ENCODE measurements at regions of chr1 and their contacts with region 1.

Region 1: GRCh38 chr1:67840449-67840848 is 7.2 kb upstream of the GNG12 start:
- DNase-seq: peak in 1 of 6 donors; percentile 38
- ATAC-seq: peak; percentile 46 to 78 (median 64)
- H3K4me3 ChIP-seq: no peak overlapping the region
- H3K27ac ChIP-seq: no peak overlapping the region
- H3K4me1 ChIP-seq: peaks cover 3 to 18% (median 5%) of the 10 kb centered on the region in 3 donors
- H3K27me3 ChIP-seq: no peaks in the 10 kb centered on the region
- CTCF ChIP-seq: no peak

Region 2: GRCh38 chr1:67771152-67771551 is 69.3 kb before region 1 on chr1:
- intact Hi-C with region 1: loop called in 1 of 3 experiments (anchors 10 kb)
- DNase-seq: peak in 4 of 6 donors; percentile 55 to 81 (median 64)
- ATAC-seq: peak; percentile 86 to 91 (median 89)
- H3K4me3 ChIP-seq: no peak overlapping the region
- H3K27ac ChIP-seq: peak overlapping the region in 1 of 4 donors; percentile 12
- H3K4me1 ChIP-seq: peaks cover 0 to 4% (median 0%) of the 10 kb centered on the region in 3 donors
- H3K27me3 ChIP-seq: no peaks in the 10 kb centered on the region
- CTCF ChIP-seq: peak in 1 of 4 donors; percentile 25